CD8-positive, alpha-beta T cell (primary cell): ENCODE measurements at regions of chr7 and their contacts with region 1.

Region 1: DNA sequence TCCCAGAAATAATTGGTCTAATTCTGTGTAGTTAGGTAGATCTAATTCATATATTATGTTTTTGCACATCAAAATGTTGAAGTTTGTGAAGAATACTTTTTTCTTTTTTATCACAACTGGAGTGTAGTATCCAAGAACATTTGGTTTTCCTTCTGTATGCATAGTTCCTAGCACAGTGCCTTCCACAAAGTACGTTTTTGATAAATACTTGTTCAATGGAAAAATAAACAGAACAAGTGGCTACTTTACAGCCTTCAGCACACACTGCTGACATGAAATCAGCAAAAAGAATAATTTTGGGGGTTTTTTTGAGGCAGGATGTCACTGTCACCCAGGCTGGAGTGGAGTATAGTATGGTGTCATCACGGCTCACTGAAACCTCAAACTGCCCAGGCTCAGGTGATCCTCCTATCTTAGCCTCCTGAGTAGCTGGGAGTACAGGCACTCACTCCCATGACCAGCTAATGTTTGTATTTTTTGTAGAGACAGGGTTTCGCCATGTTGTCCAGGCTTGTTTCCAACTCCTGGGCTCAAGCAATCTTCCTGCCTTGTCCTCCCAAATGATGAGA is 27.9 kb downstream of the TARP start:
- DNase-seq: peak in 3 of 9 experiments; percentile 35 to 83 (median 68)
- ATAC-seq: peak; percentile 50
- H3K4me3 ChIP-seq: peak overlapping the region in 1 of 2 experiments; percentile 16
- H3K4me3 Mint-ChIP-seq: peak overlapping the region; percentile 59
- H3K27ac ChIP-seq: peak overlapping the region in 1 of 2 experiments; percentile 85
- H3K27ac Mint-ChIP-seq: peak overlapping the region; percentile 88
- H3K4me1 ChIP-seq: peaks cover 10% of the 10 kb centered on the region
- H3K4me1 Mint-ChIP-seq: peaks cover 49% of the 10 kb centered on the region
- H3K27me3 ChIP-seq: no peaks in the 10 kb centered on the region
- H3K27me3 Mint-ChIP-seq: no peaks in the 10 kb centered on the region
- CTCF ChIP-seq: no peak

Region 2: DNA sequence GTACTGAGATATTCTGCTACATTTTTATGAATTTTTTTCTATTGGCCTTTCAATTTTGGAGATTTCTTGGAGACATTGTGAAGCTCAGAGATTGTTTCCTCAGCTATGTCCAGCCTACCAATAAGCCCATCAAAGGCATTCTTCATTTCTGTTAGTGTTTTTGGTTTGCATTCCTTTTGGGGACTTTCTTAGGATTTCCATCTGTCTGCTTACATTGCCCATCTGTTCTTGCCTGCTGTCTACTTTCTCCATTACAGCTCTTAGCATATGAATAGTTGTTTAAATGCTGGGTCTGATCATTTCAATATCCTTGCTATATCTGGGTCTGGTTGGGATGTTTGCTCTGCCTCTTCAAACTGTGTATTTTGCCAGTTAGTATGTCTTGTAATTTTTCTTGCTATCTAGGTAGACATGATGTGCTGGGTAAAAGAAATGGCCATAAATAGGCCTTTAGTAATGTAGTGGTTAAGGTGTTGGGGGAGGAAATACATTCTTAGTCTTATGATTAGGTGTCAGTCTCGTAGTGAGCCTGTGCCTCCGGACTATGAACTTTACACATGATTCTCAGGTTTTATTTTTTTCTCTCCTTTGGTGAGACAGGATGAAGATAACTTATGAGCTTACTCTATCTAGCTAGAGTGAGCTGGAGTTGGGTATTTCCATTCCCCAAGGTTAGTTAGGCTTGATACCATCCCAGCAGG is 429.7 kb before region 1 on chr7:
- CTCF ChIA-PET with region 1: no interaction called
- POLR2A ChIA-PET with region 1: no interaction called
- intact Hi-C with region 1: no loop called
- DNase-seq: peak in 2 of 9 experiments; percentile 23 to 25
- ATAC-seq: no peak
- H3K4me3 ChIP-seq: no peak overlapping the region
- H3K4me3 Mint-ChIP-seq: no peak overlapping the region
- H3K27ac ChIP-seq: no peak overlapping the region
- H3K27ac Mint-ChIP-seq: no peak overlapping the region
- H3K4me1 ChIP-seq: no peaks in the 10 kb centered on the region
- H3K4me1 Mint-ChIP-seq: no peaks in the 10 kb centered on the region
- H3K27me3 ChIP-seq: no peaks in the 10 kb centered on the region
- H3K27me3 Mint-ChIP-seq: no peaks in the 10 kb centered on the region
- CTCF ChIP-seq: no peak

Region 3: DNA sequence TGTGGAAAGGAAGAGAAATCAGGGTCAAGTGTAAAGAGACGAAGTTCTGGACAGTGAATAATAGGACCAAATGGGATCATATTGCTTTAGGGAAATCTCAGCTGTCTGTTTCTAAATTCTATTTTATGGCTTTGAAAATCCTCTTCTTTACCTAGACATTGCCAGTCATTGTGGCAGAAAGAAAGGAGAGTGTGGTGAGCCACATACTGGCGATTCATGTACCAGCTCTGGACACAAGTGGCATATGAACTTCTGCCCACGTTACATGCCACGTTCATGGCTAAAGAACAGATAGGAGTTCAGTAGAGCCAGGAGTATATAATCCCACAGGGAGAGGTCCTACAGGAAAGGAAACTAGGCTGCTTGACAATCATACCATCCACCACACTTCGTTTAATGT is 39.4 kb before region 1 on chr7:
- CTCF ChIA-PET with region 1: no interaction called
- POLR2A ChIA-PET with region 1: no interaction called
- intact Hi-C with region 1: no loop called
- DNase-seq: no peak
- ATAC-seq: no peak
- H3K4me3 ChIP-seq: no peak overlapping the region
- H3K4me3 Mint-ChIP-seq: no peak overlapping the region
- H3K27ac ChIP-seq: no peak overlapping the region
- H3K27ac Mint-ChIP-seq: no peak overlapping the region
- H3K4me1 ChIP-seq: no peaks in the 10 kb centered on the region
- H3K4me1 Mint-ChIP-seq: no peaks in the 10 kb centered on the region
- H3K27me3 ChIP-seq: no peaks in the 10 kb centered on the region
- H3K27me3 Mint-ChIP-seq: no peaks in the 10 kb centered on the region
- CTCF ChIP-seq: no peak

Region 4: DNA sequence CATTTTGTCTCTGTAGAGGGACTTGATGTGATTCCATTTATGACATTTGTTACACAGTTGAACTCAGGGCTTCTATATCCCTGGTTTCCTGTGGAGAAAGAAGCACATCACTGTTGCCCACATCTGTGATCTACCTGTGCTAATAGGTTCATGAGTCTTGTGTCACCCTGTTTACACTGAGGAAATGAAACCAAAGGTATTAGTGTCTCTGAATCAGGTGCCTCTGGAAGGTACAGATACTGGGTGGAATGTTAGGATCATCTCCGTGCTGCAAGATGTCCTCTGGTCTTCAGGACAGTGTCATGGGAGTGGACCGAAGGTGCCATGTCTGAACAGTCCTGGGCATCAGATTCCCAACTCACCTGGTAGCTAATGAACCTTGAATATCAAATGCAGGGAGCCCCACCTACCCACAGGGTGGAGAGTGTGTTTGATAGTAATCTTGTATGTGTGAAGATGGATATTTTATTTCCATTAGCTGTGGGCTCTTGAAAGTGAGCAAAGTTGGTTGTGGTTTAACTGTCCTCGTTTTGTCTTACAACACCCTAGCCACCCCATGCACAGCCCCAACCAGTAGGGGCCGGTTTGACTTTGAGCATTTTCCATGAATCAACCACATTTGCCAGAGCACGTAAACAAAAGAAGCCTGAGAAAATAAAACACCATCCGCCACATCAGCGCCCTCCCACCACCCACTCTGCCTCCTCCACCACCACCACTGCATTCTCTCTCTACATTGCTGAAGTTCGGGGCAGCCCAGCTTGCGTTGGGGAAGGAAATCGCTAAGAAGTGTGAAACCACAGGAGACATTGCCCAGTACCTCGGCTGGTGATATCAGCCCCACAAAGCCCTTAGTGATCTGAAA is 12.8 kb before region 1 on chr7:
- CTCF ChIA-PET with region 1: no interaction called
- POLR2A ChIA-PET with region 1: interaction called, 9 read pairs
- intact Hi-C with region 1: loop called in 1 of 2 experiments (anchors 1 kb)
- DNase-seq: peak; percentile 53 to 95 (median 72)
- ATAC-seq: peak; percentile 77
- H3K4me3 ChIP-seq: peak overlapping the region in 1 of 2 experiments; percentile 17
- H3K4me3 Mint-ChIP-seq: peak overlapping the region; percentile 69
- H3K27ac ChIP-seq: peak overlapping the region; percentile 36 to 78
- H3K27ac Mint-ChIP-seq: peak overlapping the region; percentile 94
- H3K4me1 ChIP-seq: peaks cover 45% of the 10 kb centered on the region
- H3K4me1 Mint-ChIP-seq: peaks cover 89% of the 10 kb centered on the region
- H3K27me3 ChIP-seq: no peaks in the 10 kb centered on the region
- H3K27me3 Mint-ChIP-seq: no peaks in the 10 kb centered on the region
- CTCF ChIP-seq: no peak

Region 5: GRCh38 chr7:38257350-38257677 is 11.8 kb after region 1 on chr7:
- CTCF ChIA-PET with region 1: no interaction called
- POLR2A ChIA-PET with region 1: no interaction called
- intact Hi-C with region 1: no loop called
- DNase-seq: no peak
- ATAC-seq: no peak
- H3K4me3 ChIP-seq: no peak overlapping the region
- H3K4me3 Mint-ChIP-seq: no peak overlapping the region
- H3K27ac ChIP-seq: no peak overlapping the region
- H3K27ac Mint-ChIP-seq: peak overlapping the region; percentile 41
- H3K4me1 ChIP-seq: no peaks in the 10 kb centered on the region
- H3K4me1 Mint-ChIP-seq: peaks cover 7% of the 10 kb centered on the region
- H3K27me3 ChIP-seq: no peaks in the 10 kb centered on the region
- H3K27me3 Mint-ChIP-seq: no peaks in the 10 kb centered on the region
- CTCF ChIP-seq: no peak